HCT116 (cell line): ENCODE measurements at regions of chr12 and their contacts with region 1.

Region 1: GRCh38 chr12:119036878-119037825 is 55.8 kb downstream of the SRRM4 start:
- DNase-seq: no peak
- ATAC-seq: peak; percentile 62; the same call in 1 of the 2 replicates
- H3K4me3 ChIP-seq: no peak overlapping the region
- H3K27ac ChIP-seq: no peak overlapping the region
- H3K4me1 ChIP-seq: no peaks in the 10 kb centered on the region
- H3K27me3 ChIP-seq: no peaks in the 10 kb centered on the region
- CTCF ChIP-seq: peak; percentile 45 to 78 (median 69); a peak in 5 of 6 replicates
- POLR2A ChIP-seq: no peak
- RAD21 ChIP-seq: peak; percentile 42

Region 2: DNA sequence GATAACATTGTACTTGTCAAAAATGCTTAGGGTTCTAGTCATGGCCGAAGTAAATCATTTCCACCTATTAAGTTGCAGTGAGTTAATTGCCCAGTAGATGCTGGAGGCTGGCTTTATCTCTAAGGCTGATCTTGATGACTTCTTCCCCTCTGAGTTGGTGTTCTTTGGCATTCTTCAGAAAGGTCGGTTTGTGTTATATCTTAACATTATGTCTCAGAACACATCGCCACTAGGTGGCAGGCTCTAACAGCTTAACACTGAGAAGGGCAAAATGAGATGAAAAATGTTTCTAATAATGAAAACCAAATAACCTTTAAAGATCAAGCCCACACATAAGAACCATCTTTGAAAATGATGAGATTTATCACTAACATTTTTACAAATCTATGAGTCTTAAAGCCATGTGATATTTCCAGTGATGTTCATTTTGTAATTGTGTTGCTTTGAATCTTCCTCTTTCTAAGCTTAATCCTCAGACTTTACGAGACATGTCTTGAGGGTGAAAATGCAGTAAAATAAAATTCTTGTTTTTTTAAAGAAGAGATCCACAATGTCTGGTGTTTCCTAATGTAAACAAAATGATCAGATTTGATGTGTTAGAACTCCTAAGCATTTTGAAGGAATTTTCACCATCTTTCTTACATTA is 632.2 kb before region 1 on chr12:
- CTCF ChIA-PET with region 1: no interaction called
- POLR2A ChIA-PET with region 1: no interaction called
- RAD21 ChIA-PET with region 1: no interaction called
- intact Hi-C with region 1: loop called (anchors 1 kb)
- DNase-seq: peak; percentile 37
- ATAC-seq: peak; percentile 84
- H3K4me3 ChIP-seq: no peak overlapping the region
- H3K27ac ChIP-seq: no peak overlapping the region
- H3K4me1 ChIP-seq: no peaks in the 10 kb centered on the region
- H3K27me3 ChIP-seq: no peaks in the 10 kb centered on the region
- CTCF ChIP-seq: peak; percentile 57 to 90 (median 62)
- POLR2A ChIP-seq: no peak
- RAD21 ChIP-seq: peak; percentile 80

Region 3: GRCh38 chr12:118436002-118436730 is 601.0 kb before region 1 on chr12:
- CTCF ChIA-PET with region 1: interaction called, 4 read pairs
- POLR2A ChIA-PET with region 1: no interaction called
- RAD21 ChIA-PET with region 1: no interaction called
- intact Hi-C with region 1: loop called (anchors 1 kb)
- DNase-seq: peak; percentile 12
- ATAC-seq: peak; percentile 86
- H3K4me3 ChIP-seq: no peak overlapping the region
- H3K27ac ChIP-seq: no peak overlapping the region
- H3K4me1 ChIP-seq: no peaks in the 10 kb centered on the region
- H3K27me3 ChIP-seq: peaks cover 50% of the 10 kb centered on the region
- CTCF ChIP-seq: peak; percentile 45 to 65 (median 65); a peak in 5 of 6 replicates
- POLR2A ChIP-seq: no peak
- RAD21 ChIP-seq: peak; percentile 74

Region 4: GRCh38 chr12:118850244-118850825 is 186.8 kb before region 1 on chr12:
- CTCF ChIA-PET with region 1: no interaction called
- POLR2A ChIA-PET with region 1: no interaction called
- RAD21 ChIA-PET with region 1: no interaction called
- intact Hi-C with region 1: loop called (anchors 1 kb)
- DNase-seq: peak; percentile 13
- ATAC-seq: peak; percentile 70
- H3K4me3 ChIP-seq: no peak overlapping the region
- H3K27ac ChIP-seq: no peak overlapping the region
- H3K4me1 ChIP-seq: no peaks in the 10 kb centered on the region
- H3K27me3 ChIP-seq: 0 out of 2 replicates have a peak, but pooled peaks cover 8% of the 10 kb centered on the region
- CTCF ChIP-seq: peak; percentile 29 to 94 (median 89); a peak in 5 of 6 replicates
- POLR2A ChIP-seq: no peak
- RAD21 ChIP-seq: peak; percentile 55